Posterior cingulate gyrus (tissue), 11 donors: ENCODE measurements at regions of chr10 and their contacts with region 1.

Region 1: DNA sequence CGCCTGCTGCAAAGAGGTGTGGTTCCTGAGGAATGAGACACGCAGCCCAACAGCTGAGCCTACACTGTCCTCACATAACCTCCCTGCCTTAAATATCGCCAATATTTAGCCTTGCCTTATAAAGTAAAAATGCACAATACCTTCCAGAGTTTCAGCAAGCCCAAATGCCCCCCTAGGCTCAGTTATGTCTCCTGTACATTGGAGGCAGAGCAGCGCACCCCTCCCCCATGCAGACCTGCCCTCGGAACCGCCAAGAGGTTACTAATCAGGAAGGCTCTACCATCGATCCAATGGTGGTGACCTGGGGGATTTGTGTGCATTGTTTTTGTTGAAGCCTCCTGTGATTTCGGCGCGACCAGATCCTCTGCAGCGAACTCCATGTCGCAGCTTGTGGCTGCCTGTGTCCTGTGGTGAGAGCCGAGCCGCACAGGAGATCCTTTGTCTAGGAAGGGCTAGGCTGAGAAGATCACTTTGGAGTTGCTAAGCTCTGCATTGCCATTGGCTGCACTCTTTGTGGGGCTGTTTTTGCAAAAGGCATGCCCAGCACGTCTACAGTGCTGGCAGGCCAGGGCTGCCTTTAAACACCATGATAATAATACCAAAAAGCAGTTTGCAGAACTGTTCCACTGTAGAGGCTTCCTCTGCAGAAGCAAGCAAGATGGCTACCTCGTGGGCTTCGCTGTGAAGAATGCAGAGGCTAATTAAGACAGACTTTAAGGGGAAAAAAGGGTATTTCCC is 40.1 kb downstream of the TET1 start:
- DNase-seq: peak; percentile 75 to 97 (median 81)

Region 2: GRCh38 chr10:68067029-68067428 is 533.2 kb before region 1 on chr10:
- intact Hi-C with region 1: no loop called
- DNase-seq: no peak

Region 3: GRCh38 chr10:68560186-68560942 is 39.8 kb before region 1 on chr10 and contains the start of gene TET1:
- intact Hi-C with region 1: loop called (anchors 5 kb)
- DNase-seq: peak in 6 of 10 donors; percentile 9 to 74 (median 32)